ENCODE measurements at regions of chrX and their contacts with region 1.

Region 1: GRCh38 chrX:53422086-53422860 is at the start of gene SMC1A:
- DNase-seq: peak; percentile 95
- H3K4me3 Mint-ChIP-seq: peak within 1 kb of the TSS; percentile 93
- H3K27ac Mint-ChIP-seq: peak within 1 kb of the TSS; percentile 93
- H3K4me1 Mint-ChIP-seq: peaks cover 34% of the 10 kb centered on the region
- H3K27me3 Mint-ChIP-seq: no peaks in the 10 kb centered on the region
- total RNA-seq, gene SMC1A: 130 to 132 TPM

Region 2: GRCh38 chrX:53224860-53225797 is 197.1 kb before region 1 on chrX and contains the start of gene KDM5C:
- CTCF ChIA-PET with region 1: no interaction called
- POLR2A ChIA-PET with region 1: interaction called, 10 read pairs
- DNase-seq: peak; percentile 87
- H3K4me3 Mint-ChIP-seq: peak within 1 kb of the TSS; percentile 89
- H3K27ac Mint-ChIP-seq: peak within 1 kb of the TSS; percentile 94
- H3K4me1 Mint-ChIP-seq: peaks cover 48% of the 10 kb centered on the region
- H3K27me3 Mint-ChIP-seq: no peaks in the 10 kb centered on the region
- total RNA-seq, gene KDM5C: 95.5 to 99.9 TPM

Region 3: GRCh38 chrX:53433651-53434639 is 11.7 kb after region 1 on chrX and contains the start of gene HSD17B10:
- CTCF ChIA-PET with region 1: interaction called, 22 read pairs
- POLR2A ChIA-PET with region 1: interaction called, 56 read pairs
- DNase-seq: peak; percentile 89
- H3K4me3 Mint-ChIP-seq: peak within 1 kb of the TSS; percentile 97
- H3K27ac Mint-ChIP-seq: peak within 1 kb of the TSS; percentile 89
- H3K4me1 Mint-ChIP-seq: peaks cover 49% of the 10 kb centered on the region
- H3K27me3 Mint-ChIP-seq: no peaks in the 10 kb centered on the region
- total RNA-seq, gene HSD17B10: 73.2 to 74.0 TPM

Region 4: DNA sequence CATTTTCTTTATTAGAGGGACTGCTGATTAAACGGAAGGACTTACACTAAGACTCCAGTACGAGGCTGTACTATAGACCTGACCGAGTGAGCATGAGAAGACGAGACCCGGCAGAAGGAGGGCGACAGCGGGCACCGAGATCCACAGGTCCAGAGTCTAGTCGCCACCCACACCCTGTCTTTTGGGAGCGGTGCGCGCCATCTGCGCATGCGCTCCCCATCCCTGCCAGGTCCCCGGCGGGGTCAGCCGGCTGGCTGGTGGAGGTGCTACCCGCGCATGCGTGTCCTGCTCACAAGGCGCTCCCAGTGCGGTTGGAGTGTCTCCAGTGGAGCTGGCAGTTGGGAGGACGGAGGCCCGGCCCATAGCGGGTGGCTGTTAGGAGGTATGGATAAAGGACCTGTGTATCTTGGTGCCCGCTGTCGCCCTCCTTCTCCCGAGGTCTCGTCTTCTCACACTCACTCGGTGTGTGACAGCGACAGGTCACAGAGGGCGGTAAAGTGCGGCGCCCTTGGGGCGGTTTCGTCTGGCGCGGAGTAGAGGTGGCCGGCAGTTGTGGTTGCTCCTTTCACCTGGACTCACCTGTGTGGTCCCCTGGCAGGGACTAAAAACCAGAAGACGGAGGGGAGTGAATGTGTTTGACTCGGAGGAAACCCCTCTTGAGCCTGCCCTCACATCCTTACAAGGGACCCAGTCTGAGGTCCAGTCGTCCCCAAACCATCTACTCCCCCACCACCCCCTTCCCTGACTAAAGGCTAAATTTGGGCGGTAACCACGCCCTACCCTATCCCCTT is 19.5 kb after region 1 on chrX:
- CTCF ChIA-PET with region 1: interaction called, 29 read pairs
- POLR2A ChIA-PET with region 1: interaction called, 56 read pairs
- DNase-seq: peak; percentile 83
- H3K4me3 Mint-ChIP-seq: peak overlapping the region; percentile 76
- H3K27ac Mint-ChIP-seq: peak overlapping the region; percentile 70
- H3K4me1 Mint-ChIP-seq: peaks cover 41% of the 10 kb centered on the region
- H3K27me3 Mint-ChIP-seq: no peaks in the 10 kb centered on the region

Measured in activated CD4-positive, alpha-beta memory T cell treated with anti-CD3 and anti-CD28 coated beads, Interleukin-2, amount 10 ng/mL, durations not matched to agents 7 days and 5 days (primary cell).